ENCODE measurements at regions of chr18 and their contacts with region 1.

Region 1: DNA sequence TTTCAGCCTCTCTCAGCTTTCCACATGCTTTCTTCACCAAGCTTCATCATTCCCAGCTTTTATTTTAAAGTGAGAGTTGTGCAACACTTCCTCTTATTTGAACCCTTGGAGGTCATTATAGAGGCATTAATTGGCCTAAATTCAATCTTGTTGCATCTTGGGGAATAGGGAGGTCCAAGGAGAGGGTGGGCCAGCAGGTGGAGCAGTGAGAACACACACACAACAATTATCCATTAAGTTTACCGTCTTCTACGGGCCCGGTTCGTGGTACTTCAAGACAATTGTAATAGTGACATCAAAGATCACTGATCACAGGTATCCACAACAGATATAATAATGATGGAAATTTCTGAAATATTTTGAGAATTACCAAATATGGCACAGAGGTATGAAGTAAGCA is 457.2 kb upstream of the SMIM21 start:
- DNase-seq: peak in 1 of 4 experiments; percentile 3
- ATAC-seq: no peak
- H3K4me3 ChIP-seq: no peak overlapping the region
- H3K27ac ChIP-seq: no peak overlapping the region
- H3K4me1 ChIP-seq: no peaks in the 10 kb centered on the region
- H3K27me3 ChIP-seq: no peaks in the 10 kb centered on the region; a peak in 1 of 5 replicates
- CTCF ChIP-seq: peak in 2 of 3 experiments; percentile 16 to 17; a peak in 2 of 6 replicates
- EP300 ChIP-seq: no peak
- POLR2A ChIP-seq: no peak
- RAD21 ChIP-seq: no peak

Region 2: DNA sequence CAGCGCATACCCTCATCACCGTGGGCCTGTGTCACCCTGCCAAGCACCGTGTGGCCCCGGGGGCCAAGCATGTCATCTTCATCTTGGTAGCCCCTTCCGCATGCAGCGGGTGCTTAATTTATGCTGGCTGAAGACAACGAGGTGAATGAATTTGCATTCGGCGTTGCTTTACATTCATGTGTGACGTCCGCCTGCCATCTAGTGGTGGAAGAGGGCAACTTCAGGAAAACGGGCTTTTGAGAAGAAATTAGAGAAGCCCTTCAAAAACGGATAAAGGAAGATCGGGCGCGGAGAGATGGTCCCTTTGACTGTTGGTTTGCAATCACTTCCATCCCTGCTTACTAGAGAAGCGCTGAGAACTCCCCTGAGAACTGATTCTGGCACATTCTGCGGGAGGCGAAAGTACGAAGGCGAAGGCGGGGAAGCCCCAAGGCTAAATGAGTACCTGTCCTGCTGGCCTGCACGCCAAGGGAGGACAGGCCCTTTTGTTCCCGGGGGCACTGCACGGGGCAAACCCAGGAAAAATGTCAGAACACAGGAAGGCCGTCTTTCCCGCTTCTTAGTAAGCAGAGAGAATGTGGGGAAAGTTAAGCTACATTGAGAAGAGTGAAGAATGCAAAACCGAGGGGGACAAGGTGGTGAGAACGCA is 464.5 kb after region 1 on chr18:
- CTCF ChIA-PET with region 1: no interaction called
- POLR2A ChIA-PET with region 1: no interaction called
- in situ Hi-C with region 1: no loop called
- intact Hi-C with region 1: loop called (anchors 10 kb)
- DNase-seq: peak; percentile 38 to 68 (median 48)
- ATAC-seq: peak; percentile 75
- H3K4me3 ChIP-seq: no peak overlapping the region
- H3K27ac ChIP-seq: no peak overlapping the region
- H3K4me1 ChIP-seq: no peaks in the 10 kb centered on the region
- H3K27me3 ChIP-seq: peaks cover 4 to 36% of the 10 kb centered on the region in 2 experiments; a peak in 3 of 5 replicates
- CTCF ChIP-seq: peak; percentile 61 to 79 (median 72)
- EP300 ChIP-seq: no peak
- POLR2A ChIP-seq: no peak
- RAD21 ChIP-seq: peak; percentile 39 to 66; a peak in 3 of 4 replicates

Measured in K562 (cell line).